Transverse colon (tissue), 4 donors: ENCODE measurements at regions of chr11 and their contacts with region 1.

Region 1: GRCh38 chr11:32615422-32615821 is 31.8 kb downstream of the EIF3M start:
- DNase-seq: no peak
- H3K4me3 ChIP-seq: no peak overlapping the region
- H3K27ac ChIP-seq: no peak overlapping the region
- H3K4me1 ChIP-seq: no peaks in the 10 kb centered on the region
- H3K27me3 ChIP-seq: no peaks in the 10 kb centered on the region
- CTCF ChIP-seq: no peak
- EP300 ChIP-seq: no peak
- POLR2A ChIP-seq: no peak

Region 2: GRCh38 chr11:32312865-32313403 is 302.5 kb before region 1 on chr11:
- in situ Hi-C with region 1: loop called in 1 of 4 experiments (anchors 25 kb)
- intact Hi-C with region 1: no loop called
- DNase-seq: peak; percentile 7
- H3K4me3 ChIP-seq: no peak overlapping the region
- H3K27ac ChIP-seq: no peak overlapping the region
- H3K4me1 ChIP-seq: no peaks in the 10 kb centered on the region
- H3K27me3 ChIP-seq: peaks cover 16% of the 10 kb centered on the region
- CTCF ChIP-seq: peak; percentile 31 to 53 (median 34)
- EP300 ChIP-seq: no peak
- POLR2A ChIP-seq: no peak

Region 3: GRCh38 chr11:32713496-32713895 is 98.1 kb after region 1 on chr11:
- in situ Hi-C with region 1: no loop called
- intact Hi-C with region 1: no loop called
- DNase-seq: no peak
- H3K4me3 ChIP-seq: no peak overlapping the region
- H3K27ac ChIP-seq: no peak overlapping the region
- H3K4me1 ChIP-seq: no peaks in the 10 kb centered on the region
- H3K27me3 ChIP-seq: no peaks in the 10 kb centered on the region
- CTCF ChIP-seq: no peak
- EP300 ChIP-seq: no peak
- POLR2A ChIP-seq: no peak